ENCODE measurements at regions of chr19 and their contacts with region 1.

Region 1: DNA sequence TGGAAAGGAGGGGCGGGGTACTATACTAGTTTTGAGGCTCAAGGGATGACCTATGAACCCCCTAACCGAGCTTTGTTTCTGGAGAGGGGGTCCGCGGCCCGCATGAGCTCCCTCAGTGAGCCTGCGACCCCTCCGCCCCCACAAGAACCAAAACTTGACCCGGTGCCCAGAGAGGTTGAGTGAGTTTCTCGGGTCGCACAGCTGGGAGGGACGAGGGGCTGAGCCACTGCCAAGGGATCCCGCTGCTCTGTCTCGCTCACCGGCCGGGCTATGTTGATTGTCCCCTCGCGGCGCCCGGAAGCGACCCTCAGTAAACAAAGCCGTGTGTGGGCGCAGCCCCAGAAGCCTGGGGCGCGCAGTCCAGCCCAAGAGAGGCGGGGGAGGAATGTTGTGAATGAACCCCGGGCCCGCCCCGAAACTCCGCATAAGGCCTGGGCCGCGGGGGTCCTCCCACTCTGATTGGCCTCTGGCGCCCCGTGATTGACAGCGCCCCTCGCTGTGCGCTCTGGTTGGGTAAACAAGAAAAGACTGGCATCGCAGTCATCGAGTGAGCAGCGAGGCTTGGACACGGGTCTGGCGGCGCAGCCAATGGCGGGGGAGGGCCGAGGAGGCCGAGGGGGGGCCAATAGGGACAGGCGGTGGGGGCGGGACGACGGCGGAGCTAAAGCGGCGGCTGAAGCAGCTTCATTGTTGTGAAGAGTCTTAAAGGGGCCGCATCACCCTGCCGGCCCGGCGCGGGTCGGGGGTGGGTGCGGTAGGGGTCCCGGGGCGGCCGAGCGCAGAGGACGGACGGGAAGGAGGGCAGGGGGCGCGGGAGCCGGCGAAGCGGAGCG is at the start of gene ZSWIM4:
- DNase-seq: peak; percentile 81 to 85 (median 82)
- H3K4me3 ChIP-seq: peak within 1 kb of the TSS; percentile 61 to 66
- H3K4me3 Mint-ChIP-seq: peak within 1 kb of the TSS; percentile 91 to 97 (median 96)
- H3K27ac ChIP-seq: peak within 1 kb of the TSS; percentile 53
- H3K27ac Mint-ChIP-seq: peak within 1 kb of the TSS; percentile 92 to 98 (median 95)
- H3K4me1 ChIP-seq: peaks cover 23% of the 10 kb centered on the region
- H3K4me1 Mint-ChIP-seq: peaks cover 21 to 39% (median 31%) of the 10 kb centered on the region in 4 donors
- H3K27me3 ChIP-seq: no peaks in the 10 kb centered on the region
- H3K27me3 Mint-ChIP-seq: no peaks in the 10 kb centered on the region
- total RNA-seq, gene ZSWIM4: 6.4 to 6.6 TPM

Region 2: DNA sequence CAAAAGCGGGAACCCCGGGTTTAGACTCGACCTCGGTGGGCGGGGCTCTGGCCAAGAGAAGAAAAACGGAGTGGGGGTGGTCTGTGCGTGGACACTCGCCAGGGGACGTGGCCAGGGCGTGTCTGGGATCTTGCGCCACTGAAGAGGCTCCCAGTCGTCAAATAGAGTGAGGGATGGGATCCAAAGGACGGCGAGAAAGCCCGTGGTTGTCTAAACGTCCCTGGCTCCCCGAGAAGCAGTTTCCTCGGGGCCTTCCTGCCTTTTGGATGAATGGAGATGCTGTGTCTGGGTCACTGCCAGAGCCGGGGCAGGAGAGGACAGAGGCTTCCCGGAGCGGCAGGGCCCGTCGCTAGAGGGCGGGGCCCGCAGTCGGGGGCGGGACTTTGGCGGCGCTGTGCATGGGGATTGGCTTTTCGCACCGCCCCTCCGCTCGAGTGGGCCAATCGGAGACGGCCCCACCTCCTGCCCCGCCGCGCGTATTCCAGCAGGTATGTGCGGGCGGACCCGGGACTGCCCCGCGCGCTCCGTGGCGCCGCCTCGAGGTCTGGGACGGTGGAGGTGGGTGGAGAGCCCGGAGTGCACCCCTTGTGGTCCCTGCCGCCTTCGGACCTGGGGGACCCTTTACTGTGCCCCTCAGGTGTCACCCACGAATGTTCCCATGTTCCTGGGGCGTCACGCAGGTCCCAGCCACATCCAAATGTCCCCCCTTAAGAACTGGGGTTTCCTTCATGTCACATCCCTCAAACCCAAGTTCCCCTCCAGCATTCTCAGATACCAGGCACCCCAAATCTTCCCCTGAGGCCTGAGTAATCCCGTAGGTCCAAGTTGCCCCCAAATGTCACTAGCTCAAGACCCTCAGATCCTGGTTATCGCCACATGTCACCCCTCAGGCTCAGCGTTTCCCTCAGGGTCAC is 38.6 kb after region 1 on chr19:
- CTCF ChIA-PET with region 1: interaction called, 6 read pairs
- POLR2A ChIA-PET with region 1: interaction called, 119 read pairs
- intact Hi-C with region 1: loop called (anchors 1 kb)
- DNase-seq: peak; percentile 90 to 94 (median 91)
- H3K4me3 ChIP-seq: peak overlapping the region; percentile 36 to 47
- H3K4me3 Mint-ChIP-seq: peak overlapping the region; percentile 83 to 88 (median 86)
- H3K27ac ChIP-seq: peak overlapping the region; percentile 92
- H3K27ac Mint-ChIP-seq: peak overlapping the region; percentile 96 to 100 (median 97)
- H3K4me1 ChIP-seq: peaks cover 49% of the 10 kb centered on the region
- H3K4me1 Mint-ChIP-seq: peaks cover 17 to 50% (median 30%) of the 10 kb centered on the region in 4 donors
- H3K27me3 ChIP-seq: no peaks in the 10 kb centered on the region
- H3K27me3 Mint-ChIP-seq: no peaks in the 10 kb centered on the region

Region 3: DNA sequence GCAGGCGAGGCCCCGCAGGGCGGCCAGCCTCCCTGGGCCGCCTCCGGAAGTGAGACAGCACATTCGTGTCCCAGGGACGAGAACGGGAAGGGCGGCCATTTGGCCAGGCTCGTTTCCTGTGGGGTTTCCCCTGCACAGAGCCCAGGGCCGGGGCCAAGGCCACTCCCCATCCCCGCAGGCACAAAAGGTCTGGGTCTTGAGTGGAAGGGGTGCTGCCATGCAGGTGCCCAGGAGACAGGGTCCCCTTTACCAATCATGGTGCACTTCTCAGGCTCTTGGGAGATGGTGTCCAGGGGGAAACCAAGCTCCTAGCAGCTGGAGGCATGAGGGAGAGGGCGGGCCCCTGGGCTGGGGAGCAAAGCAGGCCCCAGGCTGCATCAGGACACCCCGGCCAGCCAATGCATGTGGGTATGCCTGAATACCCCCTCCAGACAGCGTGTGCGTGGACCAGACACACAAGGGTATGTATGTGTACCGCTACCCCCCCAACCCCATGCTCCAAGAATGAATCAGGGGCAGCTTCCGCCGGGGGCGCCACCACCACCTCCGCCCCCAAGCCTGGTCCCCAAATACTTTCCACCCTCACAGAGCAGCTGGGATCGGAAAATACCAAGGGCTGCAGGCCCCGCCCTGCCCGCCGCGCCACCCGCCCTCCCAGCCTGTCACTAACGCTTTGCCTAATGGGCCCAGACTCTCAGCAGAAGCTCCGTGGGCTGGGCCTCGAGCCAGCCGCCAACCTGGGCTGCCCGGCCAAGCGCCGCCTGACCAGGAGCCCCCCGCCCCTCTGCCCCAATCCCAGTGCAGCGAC is 44.4 kb after region 1 on chr19:
- CTCF ChIA-PET with region 1: interaction called, 6 read pairs
- POLR2A ChIA-PET with region 1: interaction called, 119 read pairs
- intact Hi-C with region 1: loop called (anchors 2 kb)
- DNase-seq: peak; percentile 75 to 96 (median 79)
- H3K4me3 ChIP-seq: peak overlapping the region; percentile 63 to 86
- H3K4me3 Mint-ChIP-seq: peak overlapping the region; percentile 84 to 97 (median 95)
- H3K27ac ChIP-seq: peak overlapping the region; percentile 98
- H3K27ac Mint-ChIP-seq: peak overlapping the region; percentile 99 to 100 (median 99)
- H3K4me1 ChIP-seq: peaks cover 78% of the 10 kb centered on the region
- H3K4me1 Mint-ChIP-seq: peaks cover 25 to 87% (median 46%) of the 10 kb centered on the region in 4 donors
- H3K27me3 ChIP-seq: no peaks in the 10 kb centered on the region
- H3K27me3 Mint-ChIP-seq: no peaks in the 10 kb centered on the region

Region 4: DNA sequence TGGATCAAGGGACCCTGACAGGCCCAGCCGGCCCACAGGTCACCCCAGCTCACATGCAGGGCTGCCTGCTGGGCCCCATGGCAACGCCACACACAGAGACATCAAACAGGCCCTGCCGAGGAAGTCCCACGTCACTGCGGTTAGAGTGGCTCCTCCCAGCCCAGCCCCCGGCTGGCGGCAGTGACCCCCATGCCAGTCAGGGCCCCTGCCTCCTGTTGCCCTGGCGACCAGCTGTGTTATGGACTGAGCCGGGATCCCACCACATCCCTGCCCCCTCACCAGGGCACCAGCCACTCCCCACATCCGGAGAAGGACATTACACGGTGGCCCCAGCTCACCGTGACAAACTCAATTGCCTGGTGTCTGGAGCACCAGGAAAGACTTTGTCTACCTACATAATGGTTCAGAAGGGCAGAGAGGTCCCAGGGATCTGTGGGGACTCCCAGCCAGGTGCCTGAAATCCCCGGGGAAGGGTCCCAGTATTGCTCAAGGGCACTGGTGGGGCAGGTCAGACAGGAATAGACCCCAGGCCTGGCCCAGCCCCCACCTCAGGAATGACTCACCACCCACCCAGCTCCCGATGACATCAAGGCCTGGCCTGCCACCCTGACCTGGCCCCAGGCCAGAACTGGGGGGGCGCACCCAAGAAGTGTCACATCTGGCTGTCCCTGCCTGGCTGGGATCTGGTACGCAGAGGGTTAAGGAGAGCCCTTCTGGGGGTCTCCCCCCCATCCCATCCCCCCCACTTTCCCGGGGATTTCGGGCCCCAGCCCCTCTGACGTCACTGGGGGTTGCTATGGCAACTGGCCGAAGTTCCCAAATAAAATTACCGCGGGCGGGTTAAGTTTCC is 51.8 kb after region 1 on chr19:
- CTCF ChIA-PET with region 1: interaction called, 3 read pairs
- POLR2A ChIA-PET with region 1: interaction called, 119 read pairs
- intact Hi-C with region 1: loop called (anchors 2 kb)
- DNase-seq: peak; percentile 99
- H3K4me3 ChIP-seq: peak overlapping the region; percentile 50 to 79
- H3K4me3 Mint-ChIP-seq: peak overlapping the region; percentile 83 to 98 (median 90)
- H3K27ac ChIP-seq: peak overlapping the region; percentile 99
- H3K27ac Mint-ChIP-seq: peak overlapping the region; percentile 99 to 100 (median 100)
- H3K4me1 ChIP-seq: peaks cover 69% of the 10 kb centered on the region
- H3K4me1 Mint-ChIP-seq: peaks cover 33 to 77% (median 50%) of the 10 kb centered on the region in 4 donors
- H3K27me3 ChIP-seq: no peaks in the 10 kb centered on the region
- H3K27me3 Mint-ChIP-seq: peaks cover 0 to 4% of the 10 kb centered on the region in 2 donors